Posterior cingulate gyrus (tissue), 11 donors: ENCODE measurements at regions of chr7 and their contacts with region 1.

Region 1: GRCh38 chr7:75994388-75995051 is at the start of gene TMEM120A:
- DNase-seq: peak; percentile 88 to 99 (median 93)

Region 2: GRCh38 chr7:75679060-75679459 is 315.5 kb before region 1 on chr7:
- intact Hi-C with region 1: no loop called
- DNase-seq: peak in 2 of 10 donors; percentile 32 to 35

Region 3: DNA sequence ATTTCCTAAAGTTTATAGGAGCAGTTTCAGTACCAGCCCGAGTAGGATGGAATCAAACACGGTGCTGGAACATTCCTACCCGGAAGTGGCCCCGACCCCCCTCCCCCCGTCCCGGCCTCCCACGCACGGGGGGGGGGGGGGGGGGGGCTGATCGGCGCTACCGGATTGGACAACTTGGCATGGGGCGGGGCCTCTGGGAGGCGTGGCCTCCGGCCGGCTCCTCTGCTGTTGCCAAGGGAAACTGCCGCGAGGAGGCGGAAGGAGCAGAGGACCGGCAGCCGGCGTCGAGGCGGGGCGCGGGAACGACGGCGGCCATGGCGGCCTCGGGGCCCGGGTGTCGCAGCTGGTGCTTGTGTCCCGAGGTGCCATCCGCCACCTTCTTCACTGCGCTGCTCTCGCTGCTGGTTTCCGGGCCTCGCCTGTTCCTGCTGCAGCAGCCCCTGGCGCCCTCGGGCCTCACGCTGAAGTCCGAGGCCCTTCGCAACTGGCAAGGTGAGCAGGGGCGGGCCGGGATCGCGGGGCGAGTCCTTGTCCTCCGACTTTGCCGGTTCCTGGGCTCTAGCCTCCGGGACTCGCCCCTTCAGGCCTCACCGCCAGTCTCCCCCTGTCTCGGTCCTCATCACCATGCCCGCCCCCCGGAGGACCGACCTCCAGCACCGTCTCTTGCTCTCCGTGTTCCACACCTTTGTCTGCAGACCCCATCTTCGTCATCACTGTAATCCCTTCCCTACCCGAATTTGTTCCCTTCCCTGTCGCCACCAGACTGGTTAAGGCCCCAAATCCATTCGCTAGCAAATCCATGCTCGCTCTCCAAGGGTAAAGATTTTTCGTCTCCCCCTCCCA is 115.5 kb before region 1 on chr7 and contains the start of gene RHBDD2:
- intact Hi-C with region 1: loop called (anchors 5 kb)
- DNase-seq: peak; percentile 90 to 99 (median 94)

Region 4: GRCh38 chr7:75914730-75915585 is 79.6 kb before region 1 on chr7 and contains the start of gene POR:
- intact Hi-C with region 1: loop called (anchors 5 kb)
- DNase-seq: peak; percentile 94 to 100 (median 97)

Region 5: DNA sequence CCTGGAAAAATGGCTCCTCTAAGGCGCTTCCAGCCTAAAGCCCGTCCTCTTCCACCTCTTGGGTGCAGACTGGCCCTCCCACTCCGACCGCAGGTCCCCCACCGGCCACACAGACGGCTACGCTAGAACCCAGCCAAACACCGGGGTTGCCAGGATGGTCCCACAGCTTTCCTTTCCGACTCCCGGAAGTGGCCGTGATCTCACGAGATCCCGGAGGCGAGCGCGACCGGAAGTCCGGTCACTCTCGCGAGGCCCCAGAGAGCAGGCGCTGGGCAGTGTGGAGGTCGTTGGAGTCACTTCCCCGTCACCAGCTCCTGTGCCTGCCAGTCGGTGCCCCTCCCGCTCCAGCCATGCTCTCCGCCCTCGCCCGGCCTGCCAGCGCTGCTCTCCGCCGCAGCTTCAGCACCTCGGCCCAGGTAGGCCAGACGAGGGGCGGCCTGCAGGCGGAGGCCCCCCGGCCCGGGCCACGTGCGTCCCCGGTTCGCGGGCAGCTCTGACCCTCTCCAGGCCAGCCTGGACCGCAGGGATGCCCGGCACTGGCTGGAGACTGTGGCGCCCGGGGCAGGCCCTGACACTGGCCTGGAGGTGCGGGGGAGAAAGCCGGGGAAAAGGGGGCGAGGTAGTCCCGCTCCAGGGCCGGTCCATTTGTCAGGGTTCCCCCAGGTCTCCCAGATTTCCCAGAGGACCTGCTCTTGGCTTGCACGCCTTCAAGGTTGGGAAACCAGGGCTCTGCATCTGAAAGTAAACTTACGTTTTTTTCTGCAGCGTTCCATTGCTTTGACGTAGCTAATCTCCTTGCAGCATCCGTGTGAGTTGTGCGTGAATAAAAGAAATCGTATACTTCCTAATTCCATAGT is 53.5 kb after region 1 on chr7 and contains the starts of genes MDH2 and STYXL1:
- intact Hi-C with region 1: loop called (anchors 10 kb)
- DNase-seq: peak; percentile 89 to 99 (median 94)